ENCODE measurements at regions of chr20 and their contacts with region 1.

Region 1: GRCh38 chr20:9978397-9979004 is 56.3 kb upstream of the ANKEF1 start:
- H3K4me3 Mint-ChIP-seq: no peak overlapping the region
- H3K27ac Mint-ChIP-seq: peak overlapping the region; percentile 25
- H3K4me1 Mint-ChIP-seq: peaks cover 53% of the 10 kb centered on the region
- H3K27me3 Mint-ChIP-seq: peaks cover 12% of the 10 kb centered on the region

Region 2: GRCh38 chr20:9616833-9617489 is 361.5 kb before region 1 on chr20:
- intact Hi-C with region 1: loop called (anchors 1 kb)
- H3K4me3 Mint-ChIP-seq: no peak overlapping the region
- H3K27ac Mint-ChIP-seq: no peak overlapping the region
- H3K4me1 Mint-ChIP-seq: peaks cover 38% of the 10 kb centered on the region
- H3K27me3 Mint-ChIP-seq: peaks cover 53% of the 10 kb centered on the region

Region 3: DNA sequence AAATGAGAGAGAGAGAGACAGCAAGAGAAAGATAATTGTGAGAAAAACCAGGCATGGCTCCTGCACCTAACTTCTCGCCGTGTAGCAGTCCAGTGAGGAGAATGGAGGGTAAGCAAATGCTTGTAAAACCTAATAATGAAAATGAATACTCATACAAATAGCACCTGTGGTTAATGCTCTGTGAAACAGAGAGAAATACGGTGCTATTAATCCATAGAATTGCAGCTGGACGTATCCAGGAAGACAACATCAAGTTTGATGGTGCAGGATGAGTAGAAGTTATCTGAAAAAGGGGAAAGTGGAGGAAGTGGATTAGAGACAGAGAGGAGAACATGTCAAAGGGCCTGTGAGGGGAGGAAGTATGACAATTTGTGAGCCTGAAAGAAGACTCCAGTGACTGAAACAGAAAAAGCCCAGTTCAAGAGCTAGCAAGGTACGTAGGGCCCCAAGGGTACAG is 50.2 kb before region 1 on chr20:
- intact Hi-C with region 1: no loop called
- H3K4me3 Mint-ChIP-seq: no peak overlapping the region
- H3K27ac Mint-ChIP-seq: no peak overlapping the region
- H3K4me1 Mint-ChIP-seq: no peaks in the 10 kb centered on the region
- H3K27me3 Mint-ChIP-seq: peaks cover 18% of the 10 kb centered on the region

Region 4: DNA sequence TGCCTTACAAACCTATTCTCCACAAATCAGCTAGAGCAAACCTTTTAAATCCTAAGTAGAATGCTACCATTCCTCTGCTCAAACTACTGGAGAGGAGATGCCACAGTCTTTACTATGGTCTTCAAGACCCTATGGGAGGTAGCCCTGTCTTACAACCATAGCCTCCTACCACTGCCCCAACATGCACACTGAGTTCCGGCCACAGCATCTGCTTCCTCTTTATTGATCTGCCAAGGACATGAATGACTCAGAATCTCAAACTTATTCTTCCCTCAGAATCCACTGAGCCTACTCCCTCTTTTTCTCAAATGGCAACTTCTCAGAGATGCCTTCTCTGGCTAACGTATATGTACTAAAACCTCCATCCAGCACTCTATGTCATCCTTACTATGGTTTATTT is 44.1 kb after region 1 on chr20:
- intact Hi-C with region 1: loop called (anchors 5 kb)
- H3K4me3 Mint-ChIP-seq: no peak overlapping the region
- H3K27ac Mint-ChIP-seq: no peak overlapping the region
- H3K4me1 Mint-ChIP-seq: peaks cover 21% of the 10 kb centered on the region
- H3K27me3 Mint-ChIP-seq: no peaks in the 10 kb centered on the region

Region 5: DNA sequence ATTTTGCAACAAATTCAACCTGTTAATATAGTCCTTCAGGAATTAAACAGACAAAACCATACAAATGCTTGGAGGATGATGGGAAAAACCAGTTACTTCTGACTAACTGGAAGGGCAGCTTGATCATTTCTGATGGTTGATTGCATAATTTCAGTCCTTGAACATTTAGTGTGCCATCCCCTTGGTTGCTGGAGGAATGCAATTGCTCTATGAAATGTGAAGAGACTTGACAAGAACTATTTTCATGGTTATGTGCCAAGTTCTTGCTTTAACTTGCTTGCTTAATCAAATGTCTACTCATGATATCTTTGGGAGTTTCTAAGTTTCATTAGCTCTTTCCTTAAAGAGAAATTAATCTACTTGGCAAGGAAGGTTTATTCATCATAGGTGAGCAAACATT is 101.5 kb after region 1 on chr20:
- intact Hi-C with region 1: no loop called
- H3K4me3 Mint-ChIP-seq: no peak overlapping the region
- H3K27ac Mint-ChIP-seq: no peak overlapping the region
- H3K4me1 Mint-ChIP-seq: peaks cover 8% of the 10 kb centered on the region
- H3K27me3 Mint-ChIP-seq: peaks cover 5% of the 10 kb centered on the region

Region 6: GRCh38 chr20:10090588-10091166 is 112.2 kb after region 1 on chr20:
- intact Hi-C with region 1: loop called (anchors 1 kb)
- H3K4me3 Mint-ChIP-seq: no peak overlapping the region
- H3K27ac Mint-ChIP-seq: no peak overlapping the region
- H3K4me1 Mint-ChIP-seq: peaks cover 18% of the 10 kb centered on the region
- H3K27me3 Mint-ChIP-seq: peaks cover 5% of the 10 kb centered on the region

Region 7: GRCh38 chr20:10427060-10427692 is 448.7 kb after region 1 on chr20:
- intact Hi-C with region 1: loop called (anchors 2 kb)
- H3K4me3 Mint-ChIP-seq: no peak overlapping the region
- H3K27ac Mint-ChIP-seq: peak overlapping the region; percentile 4
- H3K4me1 Mint-ChIP-seq: peaks cover 73% of the 10 kb centered on the region
- H3K27me3 Mint-ChIP-seq: no peaks in the 10 kb centered on the region

Region 8: DNA sequence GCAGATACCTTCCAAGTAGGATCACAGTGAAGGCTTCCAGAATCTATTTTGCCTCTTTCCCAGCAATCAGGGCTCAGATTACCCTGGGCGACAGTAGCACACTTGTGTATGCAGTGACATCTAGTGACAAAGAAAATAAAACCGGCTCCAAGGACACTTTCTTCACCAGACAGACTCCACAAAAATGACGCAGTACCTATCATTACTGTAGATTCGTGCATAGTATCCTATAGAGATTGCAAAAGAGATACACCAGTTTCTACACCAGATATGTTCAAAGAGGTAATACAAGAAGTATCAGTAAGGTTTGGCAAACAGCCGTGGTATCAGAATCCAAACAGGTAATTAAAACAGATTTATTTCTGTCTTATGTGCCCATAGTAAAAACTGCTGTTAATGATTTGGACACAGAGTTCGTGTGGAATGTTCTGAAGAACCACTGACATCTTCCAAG is 1295.7 kb after region 1 on chr20:
- intact Hi-C with region 1: loop called (anchors 2 kb)
- H3K4me3 Mint-ChIP-seq: no peak overlapping the region
- H3K27ac Mint-ChIP-seq: no peak overlapping the region
- H3K4me1 Mint-ChIP-seq: peaks cover 10% of the 10 kb centered on the region
- H3K27me3 Mint-ChIP-seq: peaks cover 1% of the 10 kb centered on the region

Measured in dendritic cell treated with granulocyte-macrophage colony-stimulating factor and Interleukin-4, amounts not matched to agents 40 ng/mL and 50 ng/mL, for 4 days (primary cell).